Activated CD4-positive, alpha-beta T cell treated with anti-CD3 and anti-CD28 coated beads for 36 hours (primary cell): ENCODE measurements at regions of chr6 and their contacts with region 1.

Region 1: DNA sequence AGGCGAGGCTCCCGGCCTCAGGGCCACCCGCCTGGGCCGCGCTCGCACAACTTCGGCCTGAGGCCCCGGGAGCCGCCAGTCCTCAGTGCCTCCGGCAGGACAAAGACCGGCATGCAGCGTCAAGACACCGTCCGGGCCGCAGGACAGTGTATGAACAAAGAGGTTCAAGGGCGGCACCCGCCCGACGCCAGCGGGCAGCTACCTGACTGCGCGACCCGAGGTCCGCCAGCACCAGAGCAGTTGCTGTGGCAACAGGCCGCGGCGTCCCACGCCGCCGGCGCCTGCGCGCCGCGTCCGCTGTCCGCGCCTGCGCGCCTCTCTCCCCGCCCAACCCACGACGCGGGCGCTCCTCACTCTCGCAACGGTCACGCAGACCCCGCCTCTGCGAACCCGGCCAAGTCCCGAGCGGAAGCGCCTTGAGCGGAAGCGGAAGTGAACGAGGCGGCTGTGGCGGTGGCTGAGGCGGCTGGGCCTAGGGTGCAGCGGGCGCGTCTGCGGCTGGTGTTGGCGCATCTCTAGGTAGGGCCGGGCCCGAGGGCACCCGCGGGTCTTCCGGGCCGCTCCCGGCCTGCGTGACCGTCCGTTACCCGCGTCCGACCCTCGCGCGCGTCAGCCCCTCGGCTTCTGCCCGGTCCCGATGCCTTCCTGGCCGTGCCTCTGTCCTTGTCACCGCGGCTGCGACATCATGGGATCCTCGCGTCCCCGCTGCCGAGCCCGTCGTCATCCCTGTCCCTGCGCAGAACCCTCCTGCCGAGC is at the start of gene FAM120B:
- DNase-seq: peak; percentile 96
- ATAC-seq: peak; percentile 97
- H3K4me3 Mint-ChIP-seq: peak within 1 kb of the TSS; percentile 100
- H3K27ac Mint-ChIP-seq: peak within 1 kb of the TSS; percentile 98
- H3K4me1 Mint-ChIP-seq: peaks cover 40% of the 10 kb centered on the region
- H3K27me3 Mint-ChIP-seq: peaks cover 14% of the 10 kb centered on the region
- total RNA-seq, gene FAM120B: 21.9 to 26.3 TPM

Region 2: GRCh38 chr6:169654598-169655391 is 651.7 kb before region 1 on chr6:
- CTCF ChIA-PET with region 1: no interaction called
- POLR2A ChIA-PET with region 1: no interaction called
- intact Hi-C with region 1: no loop called
- DNase-seq: peak; percentile 83
- ATAC-seq: peak; percentile 95
- H3K4me3 Mint-ChIP-seq: peak overlapping the region; percentile 74
- H3K27ac Mint-ChIP-seq: peak overlapping the region; percentile 75
- H3K4me1 Mint-ChIP-seq: peaks cover 7% of the 10 kb centered on the region
- H3K27me3 Mint-ChIP-seq: no peaks in the 10 kb centered on the region

Region 3: GRCh38 chr6:169723200-169723909 is 583.1 kb before region 1 on chr6:
- CTCF ChIA-PET with region 1: no interaction called
- POLR2A ChIA-PET with region 1: no interaction called
- intact Hi-C with region 1: loop called in 1 of 2 experiments (anchors 5 kb)
- DNase-seq: peak; percentile 80
- ATAC-seq: peak; percentile 33
- H3K4me3 Mint-ChIP-seq: peak overlapping the region; percentile 88
- H3K27ac Mint-ChIP-seq: peak overlapping the region; percentile 99
- H3K4me1 Mint-ChIP-seq: peaks cover 43% of the 10 kb centered on the region
- H3K27me3 Mint-ChIP-seq: no peaks in the 10 kb centered on the region

Region 4: GRCh38 chr6:170271771-170272314 is 34.7 kb before region 1 on chr6:
- CTCF ChIA-PET with region 1: no interaction called
- POLR2A ChIA-PET with region 1: interaction called, 4 read pairs
- intact Hi-C with region 1: loop called (anchors 1 to 2 kb)
- DNase-seq: peak; percentile 88
- ATAC-seq: peak; percentile 95
- H3K4me3 Mint-ChIP-seq: peak overlapping the region; percentile 66
- H3K27ac Mint-ChIP-seq: peak overlapping the region; percentile 83
- H3K4me1 Mint-ChIP-seq: peaks cover 14% of the 10 kb centered on the region
- H3K27me3 Mint-ChIP-seq: peaks cover 3% of the 10 kb centered on the region

Region 5: GRCh38 chr6:170344631-170345575 is 38.4 kb after region 1 on chr6:
- CTCF ChIA-PET with region 1: no interaction called
- POLR2A ChIA-PET with region 1: no interaction called
- intact Hi-C with region 1: loop called in 1 of 2 experiments (anchors 1 kb)
- DNase-seq: peak; percentile 52
- ATAC-seq: peak; percentile 57
- H3K4me3 Mint-ChIP-seq: no peak overlapping the region
- H3K27ac Mint-ChIP-seq: peak overlapping the region; percentile 44
- H3K4me1 Mint-ChIP-seq: peaks cover 36% of the 10 kb centered on the region
- H3K27me3 Mint-ChIP-seq: no peaks in the 10 kb centered on the region

Region 6: GRCh38 chr6:170360476-170360875 is 54.0 kb after region 1 on chr6:
- CTCF ChIA-PET with region 1: no interaction called
- POLR2A ChIA-PET with region 1: no interaction called
- intact Hi-C with region 1: no loop called
- DNase-seq: no peak
- ATAC-seq: no peak
- H3K4me3 Mint-ChIP-seq: no peak overlapping the region
- H3K27ac Mint-ChIP-seq: no peak overlapping the region
- H3K4me1 Mint-ChIP-seq: no peaks in the 10 kb centered on the region
- H3K27me3 Mint-ChIP-seq: no peaks in the 10 kb centered on the region

Region 7: GRCh38 chr6:170554013-170554795 is 247.7 kb after region 1 on chr6 and contains the start of gene TBP:
- CTCF ChIA-PET with region 1: no interaction called
- POLR2A ChIA-PET with region 1: no interaction called
- intact Hi-C with region 1: loop called (anchors 1 to 10 kb)
- DNase-seq: peak; percentile 98
- ATAC-seq: peak; percentile 96
- H3K4me3 Mint-ChIP-seq: no peak within 1 kb of the TSS
- H3K27ac Mint-ChIP-seq: no peak within 1 kb of the TSS
- H3K4me1 Mint-ChIP-seq: peaks cover 36% of the 10 kb centered on the region
- H3K27me3 Mint-ChIP-seq: no peaks in the 10 kb centered on the region
- total RNA-seq, gene TBP: 23.9 to 27.4 TPM